Thyroid gland (tissue), 4 donors: ENCODE measurements at regions of chr1 and their contacts with region 1.

Region 1: DNA sequence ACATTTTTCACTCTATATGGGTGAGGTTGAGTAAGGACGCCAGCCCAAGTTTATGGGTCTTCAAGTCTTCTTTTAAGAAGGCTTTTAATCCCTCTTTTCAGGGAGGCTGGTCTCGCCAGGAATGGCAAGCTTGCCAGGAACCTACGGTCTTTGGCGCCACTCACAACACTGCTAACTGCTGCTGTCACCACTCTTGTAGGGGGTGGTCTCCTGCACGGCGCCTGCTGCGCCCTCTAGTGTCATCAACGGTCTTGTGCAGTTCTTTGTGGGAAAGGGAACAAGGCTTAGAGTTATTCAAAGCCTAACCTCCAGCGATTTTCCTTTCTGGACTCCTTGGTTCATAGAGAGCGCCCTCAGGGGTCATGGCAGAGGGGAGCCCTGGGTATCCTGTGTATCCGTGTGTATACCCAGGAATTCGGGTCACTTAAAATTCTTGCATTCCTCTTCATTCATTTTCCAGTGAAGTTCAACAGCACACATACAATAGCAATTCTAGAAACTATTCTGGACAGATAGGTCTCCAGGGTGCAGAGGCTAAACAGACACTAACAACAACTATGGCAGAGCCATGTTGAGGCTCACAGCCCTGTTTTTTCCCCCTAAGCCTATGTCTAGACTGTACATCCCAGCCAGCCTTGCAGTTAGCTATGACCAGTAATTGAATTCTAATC is 392.8 kb upstream of the CAMK1G start:
- DNase-seq: peak; percentile 58 to 67
- H3K4me3 ChIP-seq: no peak overlapping the region
- H3K27ac ChIP-seq: no peak overlapping the region
- H3K4me1 ChIP-seq: no peaks in the 10 kb centered on the region
- H3K27me3 ChIP-seq: no peaks in the 10 kb centered on the region
- CTCF ChIP-seq: peak; percentile 31 to 75 (median 60)
- POLR2A ChIP-seq: no peak

Region 2: GRCh38 chr1:208652296-208653160 is 538.2 kb before region 1 on chr1:
- intact Hi-C with region 1: loop called (anchors 10 kb)
- DNase-seq: peak; percentile 50 to 60
- H3K4me3 ChIP-seq: no peak overlapping the region
- H3K27ac ChIP-seq: no peak overlapping the region
- H3K4me1 ChIP-seq: peaks cover 0 to 12% of the 10 kb centered on the region in 2 donors
- H3K27me3 ChIP-seq: no peaks in the 10 kb centered on the region
- CTCF ChIP-seq: peak; percentile 73 to 85 (median 78)
- POLR2A ChIP-seq: no peak